Activated CD4-positive, alpha-beta T cell treated with anti-CD3 and anti-CD28 coated beads for 36 hours (primary cell): ENCODE measurements at regions of chr12 and their contacts with region 1.

Region 1: DNA sequence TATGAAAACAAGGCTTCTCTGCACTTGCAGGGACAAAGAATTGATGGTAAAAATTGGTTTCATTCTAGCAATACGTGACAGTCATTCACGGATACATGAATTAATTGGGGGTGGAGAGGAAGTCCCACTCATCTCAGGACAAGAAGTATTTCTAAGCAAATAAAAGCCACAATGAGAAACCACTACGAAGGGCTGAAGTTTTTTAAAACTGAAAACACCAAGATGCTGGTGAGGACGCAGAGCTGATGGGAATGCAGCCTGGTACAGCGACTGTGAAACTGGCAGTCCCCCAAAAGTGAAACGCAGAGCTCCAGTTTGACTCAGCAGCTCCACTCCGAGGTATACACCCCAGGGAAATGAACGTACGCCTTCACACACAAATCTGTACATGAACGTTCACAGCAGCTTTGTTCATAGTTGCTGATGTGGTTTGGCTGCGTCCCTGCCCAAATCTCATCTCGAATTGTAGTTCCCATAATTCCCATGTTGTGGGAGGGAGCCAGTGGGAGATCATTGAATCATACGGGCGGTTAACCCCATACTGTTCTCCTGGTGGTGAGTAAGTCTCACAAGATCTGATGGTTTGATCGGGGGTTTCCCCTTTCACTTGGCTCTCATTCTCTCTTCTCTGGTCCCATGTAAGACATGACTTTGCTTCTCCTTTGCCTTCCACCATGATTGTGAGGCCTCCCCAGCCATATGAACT is 89.0 kb downstream of the SCARB1 start:
- DNase-seq: peak; percentile 92
- ATAC-seq: peak; percentile 89
- H3K4me3 Mint-ChIP-seq: peak overlapping the region; percentile 55
- H3K27ac Mint-ChIP-seq: peak overlapping the region; percentile 83
- H3K4me1 Mint-ChIP-seq: peaks cover 46% of the 10 kb centered on the region
- H3K27me3 Mint-ChIP-seq: peaks cover 12% of the 10 kb centered on the region

Region 2: GRCh38 chr12:123972457-123973401 is 801.9 kb before region 1 on chr12 and contains the starts of genes CCDC92 and ZNF664:
- CTCF ChIA-PET with region 1: no interaction called
- POLR2A ChIA-PET with region 1: no interaction called
- intact Hi-C with region 1: loop called in 1 of 2 experiments (anchors 2 kb)
- DNase-seq: peak; percentile 98
- ATAC-seq: peak; percentile 87
- H3K4me3 Mint-ChIP-seq: peak within 1 kb of the TSS; percentile 87
- H3K27ac Mint-ChIP-seq: peak within 1 kb of the TSS; percentile 89
- H3K4me1 Mint-ChIP-seq: peaks cover 48% of the 10 kb centered on the region
- H3K27me3 Mint-ChIP-seq: no peaks in the 10 kb centered on the region
- total RNA-seq, gene CCDC92: 8.7 to 11.0 TPM
- total RNA-seq, gene ZNF664: 46.4 to 48.3 TPM

Region 3: DNA sequence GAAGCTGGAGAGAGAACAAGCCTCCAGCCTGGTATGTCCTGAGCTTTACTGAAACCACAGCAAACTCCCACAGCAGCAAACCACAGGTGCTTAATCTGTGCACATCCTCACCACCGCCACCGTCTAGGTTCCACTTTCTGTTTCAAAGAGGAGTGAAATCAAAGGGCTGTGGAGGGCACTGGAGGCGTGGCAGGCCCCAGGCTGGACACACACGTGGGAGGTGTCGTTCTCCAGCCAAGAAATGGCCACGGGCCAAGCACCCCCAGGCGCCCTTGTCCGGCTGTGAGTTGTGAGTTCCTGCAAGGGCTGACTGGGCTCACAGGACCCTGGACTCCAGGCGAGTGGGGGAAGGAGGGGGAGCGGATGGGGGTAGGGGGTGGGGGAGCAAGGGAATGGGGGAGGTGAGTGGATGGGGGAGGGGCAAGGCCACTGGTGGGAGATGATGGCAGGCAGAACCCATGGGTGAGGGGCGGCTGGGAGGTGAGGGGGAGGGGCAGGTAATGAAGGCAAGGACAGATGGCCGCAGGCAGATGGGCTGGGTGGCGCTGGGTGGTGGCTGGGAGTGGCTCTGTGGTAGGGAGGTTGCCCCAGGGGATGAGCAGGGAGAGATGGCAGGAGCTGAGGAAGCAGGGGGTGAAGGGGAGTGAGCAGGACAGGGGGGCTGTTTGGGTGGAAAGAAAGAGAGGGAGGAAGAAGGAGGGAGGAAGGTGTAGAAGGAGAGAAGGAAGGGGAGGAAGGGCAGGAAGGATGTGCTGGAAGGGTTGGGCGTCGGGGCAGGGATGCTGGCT is 294.0 kb before region 1 on chr12:
- CTCF ChIA-PET with region 1: no interaction called
- POLR2A ChIA-PET with region 1: no interaction called
- intact Hi-C with region 1: no loop called
- DNase-seq: peak; percentile 80
- ATAC-seq: peak; percentile 85
- H3K4me3 Mint-ChIP-seq: no peak overlapping the region
- H3K27ac Mint-ChIP-seq: no peak overlapping the region
- H3K4me1 Mint-ChIP-seq: peaks cover 41% of the 10 kb centered on the region
- H3K27me3 Mint-ChIP-seq: no peaks in the 10 kb centered on the region

Region 4: GRCh38 chr12:124545508-124546418 is 228.9 kb before region 1 on chr12:
- CTCF ChIA-PET with region 1: interaction called, 4 read pairs
- POLR2A ChIA-PET with region 1: no interaction called
- intact Hi-C with region 1: loop called in 1 of 2 experiments (anchors 1 kb)
- DNase-seq: peak; percentile 85
- ATAC-seq: peak; percentile 84
- H3K4me3 Mint-ChIP-seq: peak overlapping the region; percentile 31
- H3K27ac Mint-ChIP-seq: peak overlapping the region; percentile 37
- H3K4me1 Mint-ChIP-seq: peaks cover 70% of the 10 kb centered on the region
- H3K27me3 Mint-ChIP-seq: no peaks in the 10 kb centered on the region

Region 5: DNA sequence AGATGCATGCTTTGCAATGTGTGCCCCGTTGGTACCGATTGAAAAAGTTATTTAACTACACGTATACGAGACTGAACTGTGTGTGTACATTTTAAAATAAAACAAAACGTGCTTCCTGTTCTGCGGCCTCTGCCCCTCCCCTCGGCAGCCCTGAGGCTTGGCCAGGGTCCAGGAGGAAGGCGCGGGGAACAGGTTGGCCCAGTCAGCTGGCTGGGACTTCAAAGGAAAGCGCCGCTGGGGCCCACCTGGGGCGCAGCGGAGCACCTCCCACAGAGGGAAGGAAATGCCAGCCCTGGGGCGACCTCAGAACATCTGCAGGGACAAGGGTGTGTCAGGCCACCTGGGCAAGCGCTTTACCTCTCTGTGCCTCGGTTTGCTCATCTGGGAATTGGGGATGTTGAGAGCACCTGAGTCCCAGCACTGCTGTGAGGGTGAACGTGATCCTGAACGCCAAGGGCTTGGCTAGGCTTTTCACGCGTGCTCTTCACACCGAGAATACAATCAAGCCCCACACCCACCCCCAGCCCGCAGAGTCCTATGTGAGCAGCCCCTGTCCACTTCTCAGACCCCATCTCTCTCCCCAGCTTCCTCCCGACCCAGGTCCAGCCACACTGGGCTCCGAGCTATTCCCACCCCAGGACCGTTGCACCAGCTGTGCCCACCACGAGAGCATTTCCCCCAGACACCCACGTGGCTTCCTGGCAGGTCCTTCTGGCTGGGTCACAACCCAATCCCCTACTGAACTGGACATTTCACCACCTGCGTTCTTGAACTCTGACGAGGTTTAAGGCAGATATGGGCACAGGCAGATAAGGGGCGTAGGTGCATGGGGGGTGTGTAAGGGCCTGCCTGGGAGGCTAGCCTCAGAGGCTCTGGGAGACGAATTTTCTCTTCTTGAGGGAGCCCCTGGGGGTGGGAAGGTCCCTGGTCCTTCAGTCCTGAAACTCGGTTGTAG is 165.3 kb before region 1 on chr12:
- CTCF ChIA-PET with region 1: no interaction called
- POLR2A ChIA-PET with region 1: no interaction called
- intact Hi-C with region 1: no loop called
- DNase-seq: peak; percentile 88
- ATAC-seq: peak; percentile 90
- H3K4me3 Mint-ChIP-seq: peak overlapping the region; percentile 2
- H3K27ac Mint-ChIP-seq: peak overlapping the region; percentile 7
- H3K4me1 Mint-ChIP-seq: peaks cover 21% of the 10 kb centered on the region
- H3K27me3 Mint-ChIP-seq: no peaks in the 10 kb centered on the region

Region 6: DNA sequence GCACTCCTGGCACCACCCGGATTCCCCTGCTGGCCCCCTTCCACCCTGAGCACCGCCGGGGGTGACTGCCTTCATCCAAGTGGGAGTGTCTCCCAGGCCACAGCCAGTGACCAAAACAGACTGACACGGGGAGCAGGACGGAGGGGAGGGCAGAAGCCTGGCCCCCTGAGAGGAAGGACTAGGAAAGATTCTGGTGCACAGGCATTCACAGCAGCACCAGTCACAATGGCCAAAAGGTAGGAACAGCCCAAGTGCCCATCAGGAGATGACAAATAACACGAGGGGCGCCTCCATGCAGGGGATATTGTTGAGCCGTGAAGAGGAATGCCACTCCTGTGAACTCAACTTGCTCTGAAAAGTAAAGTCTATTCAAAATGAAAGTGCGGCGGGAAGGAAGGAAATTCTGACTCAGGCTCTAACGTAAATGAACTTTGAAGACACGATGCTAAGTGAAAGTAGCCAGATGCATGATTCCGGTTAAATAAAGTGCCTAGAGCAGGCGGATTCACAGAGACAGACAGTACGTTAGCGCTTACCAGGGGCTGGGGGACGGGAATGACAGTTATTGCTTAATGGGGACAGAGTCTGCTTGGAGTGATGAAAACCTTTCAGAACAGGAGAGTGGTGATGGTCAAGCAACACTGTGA is 61.1 kb before region 1 on chr12:
- CTCF ChIA-PET with region 1: interaction called, 3 read pairs
- POLR2A ChIA-PET with region 1: no interaction called
- intact Hi-C with region 1: loop called (anchors 1 kb)
- DNase-seq: peak; percentile 74
- ATAC-seq: peak; percentile 96
- H3K4me3 Mint-ChIP-seq: peak overlapping the region; percentile 58
- H3K27ac Mint-ChIP-seq: peak overlapping the region; percentile 81
- H3K4me1 Mint-ChIP-seq: peaks cover 22% of the 10 kb centered on the region
- H3K27me3 Mint-ChIP-seq: peaks cover 2% of the 10 kb centered on the region

Region 7: DNA sequence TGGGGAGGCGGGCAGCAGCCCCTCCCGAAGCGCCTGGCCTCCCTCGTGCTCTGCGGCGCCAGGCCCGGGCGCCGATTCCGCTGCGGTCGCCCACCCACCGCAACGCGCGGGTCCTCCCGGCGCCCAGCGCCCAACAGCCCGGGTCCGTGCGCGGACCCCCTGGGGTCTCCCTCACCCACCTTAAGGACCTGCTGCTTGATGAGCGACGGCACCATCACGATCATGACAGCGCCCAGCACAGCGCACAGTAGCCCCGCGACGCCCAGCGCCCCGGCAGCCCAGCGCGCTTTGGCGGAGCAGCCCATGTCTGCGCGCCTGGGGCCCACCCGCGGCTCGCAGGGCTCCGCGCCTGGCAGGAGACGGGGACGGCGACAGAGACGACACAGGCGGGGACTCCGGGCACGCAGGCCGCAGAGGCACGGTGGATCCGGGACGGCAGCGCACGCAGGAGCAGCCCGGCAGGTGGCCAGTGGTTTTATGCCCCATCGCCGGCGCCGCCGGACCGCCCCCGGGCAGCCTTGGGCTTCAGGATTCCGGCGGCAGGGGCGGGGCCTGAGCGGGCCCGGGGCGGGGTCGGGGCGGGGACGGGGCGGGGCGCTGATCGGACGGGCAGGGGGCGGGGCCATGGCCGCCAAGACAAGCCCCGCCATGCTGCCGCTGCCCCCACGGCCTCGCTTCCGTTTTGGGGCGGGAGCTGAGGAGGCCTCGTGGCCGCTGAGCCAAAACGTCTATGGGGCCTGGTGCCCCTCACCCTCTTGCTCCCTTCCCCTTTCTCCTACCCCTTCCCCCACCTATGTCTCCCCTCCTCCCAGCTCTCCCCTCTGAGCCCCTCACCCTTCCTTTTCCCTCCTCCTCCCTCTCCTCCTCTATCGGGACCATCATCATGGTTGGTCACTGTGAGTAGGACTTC is 89.1 kb after region 1 on chr12 and contains the start of gene SCARB1:
- CTCF ChIA-PET with region 1: no interaction called
- POLR2A ChIA-PET with region 1: no interaction called
- intact Hi-C with region 1: loop called in 1 of 2 experiments (anchors 1 kb)
- DNase-seq: peak; percentile 91
- ATAC-seq: peak; percentile 91
- H3K4me3 Mint-ChIP-seq: peak within 1 kb of the TSS; percentile 76
- H3K27ac Mint-ChIP-seq: peak within 1 kb of the TSS; percentile 89
- H3K4me1 Mint-ChIP-seq: peaks cover 21% of the 10 kb centered on the region
- H3K27me3 Mint-ChIP-seq: peaks cover 3% of the 10 kb centered on the region
- total RNA-seq, gene SCARB1: 22.9 to 24.1 TPM

Region 8: DNA sequence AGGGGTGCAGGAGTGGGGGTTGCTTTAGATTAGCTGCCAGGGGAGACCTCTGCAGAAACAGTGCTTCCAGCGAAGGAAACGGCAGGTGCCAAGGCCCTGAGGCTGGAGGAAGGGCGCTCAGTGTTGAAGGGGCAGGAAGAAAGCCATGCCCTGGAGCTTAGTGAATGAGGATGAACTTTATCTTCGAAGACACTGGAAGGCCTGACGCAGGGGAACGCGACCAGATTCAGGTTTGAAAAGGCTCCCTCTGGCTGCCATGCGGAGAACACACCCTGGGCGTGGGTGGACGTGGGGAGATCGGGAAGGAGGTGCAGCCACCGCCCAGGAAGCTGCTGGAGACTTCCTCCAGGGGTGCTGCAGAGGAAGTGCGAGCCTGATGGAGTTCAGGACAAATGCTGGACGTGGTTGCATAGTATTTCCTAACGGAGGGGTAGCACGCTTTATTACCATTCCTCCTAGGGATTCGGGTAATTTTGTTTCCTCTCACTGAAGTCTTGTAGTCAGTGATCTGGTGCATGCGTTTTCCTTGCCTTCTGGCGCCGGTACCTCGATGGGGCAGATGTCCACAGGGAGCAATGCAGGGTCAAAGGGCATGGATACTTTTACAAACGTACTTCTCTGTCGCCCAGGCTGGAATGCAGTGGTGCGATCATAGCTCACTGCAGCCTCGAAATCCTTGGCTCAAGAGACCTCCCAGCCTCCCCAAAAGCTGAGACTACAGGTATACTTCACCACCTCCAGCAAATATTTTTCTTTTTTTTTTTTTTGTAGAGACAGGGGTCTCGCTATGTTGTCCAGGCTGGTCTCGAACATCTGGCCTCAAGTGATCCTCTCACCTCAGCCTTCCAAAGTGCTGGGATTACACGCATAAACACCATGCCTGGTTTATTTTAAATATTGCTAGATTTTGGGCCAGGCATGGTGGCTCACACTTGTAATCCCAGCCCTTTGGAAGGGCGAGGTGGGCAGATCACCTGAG is 166.2 kb after region 1 on chr12:
- CTCF ChIA-PET with region 1: interaction called, 6 read pairs
- POLR2A ChIA-PET with region 1: no interaction called
- intact Hi-C with region 1: loop called in 1 of 2 experiments (anchors 1 kb)
- DNase-seq: peak; percentile 95
- ATAC-seq: peak; percentile 39
- H3K4me3 Mint-ChIP-seq: no peak overlapping the region
- H3K27ac Mint-ChIP-seq: no peak overlapping the region
- H3K4me1 Mint-ChIP-seq: peaks cover 11% of the 10 kb centered on the region
- H3K27me3 Mint-ChIP-seq: no peaks in the 10 kb centered on the region